ENCODE measurements at regions of chr6 and their contacts with region 1.

Region 1: DNA sequence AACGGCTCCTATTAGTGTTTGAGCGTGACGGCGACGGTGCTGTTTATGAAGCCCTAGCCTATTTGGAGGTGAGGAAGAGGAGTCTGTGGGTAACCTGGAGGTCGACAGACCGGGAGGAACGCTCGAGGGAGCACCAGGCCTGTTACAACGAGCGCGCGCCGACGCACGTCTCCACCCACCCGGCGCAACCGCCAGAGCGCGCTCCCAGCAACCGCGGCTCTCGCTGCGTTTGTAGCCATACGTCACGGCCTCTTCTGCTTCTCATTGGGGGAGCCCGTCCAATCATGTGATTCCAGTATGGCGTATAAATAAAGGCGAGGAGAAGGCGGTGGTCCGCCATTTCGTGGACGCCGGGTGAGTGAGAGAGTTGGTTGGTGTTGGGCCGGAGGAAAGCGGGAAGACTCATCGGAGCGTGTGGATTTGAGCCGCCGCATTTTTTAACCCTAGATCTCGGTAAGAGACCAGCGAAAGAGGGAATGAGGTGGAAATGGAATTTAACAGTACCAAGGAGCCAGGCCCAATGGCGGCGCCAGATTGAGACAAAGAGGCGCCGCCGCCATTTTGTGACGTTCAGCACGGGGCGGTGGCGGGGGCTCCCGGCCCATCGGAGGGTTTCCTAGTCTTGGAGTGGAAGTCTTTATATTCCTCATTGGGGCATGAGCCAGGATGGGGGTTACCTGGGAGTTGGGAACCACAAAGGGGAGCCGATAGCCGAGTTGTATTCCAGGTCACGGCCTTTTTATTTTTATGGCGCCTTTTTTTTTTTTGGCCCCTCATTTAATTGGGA is at the start of gene SRSF3:
- DNase-seq: peak; percentile 87 to 99 (median 97)
- ATAC-seq: peak; percentile 95
- H3K4me3 ChIP-seq: peak within 1 kb of the TSS; percentile 85
- H3K4me3 Mint-ChIP-seq: peak within 1 kb of the TSS; percentile 90 to 99 (median 97)
- H3K27ac ChIP-seq: peak within 1 kb of the TSS; percentile 98
- H3K27ac Mint-ChIP-seq: peak within 1 kb of the TSS; percentile 97 to 100 (median 99)
- H3K4me1 ChIP-seq: peaks cover 23 to 34% of the 10 kb centered on the region in 2 donors
- H3K4me1 Mint-ChIP-seq: peaks cover 23 to 50% (median 39%) of the 10 kb centered on the region in 7 donors
- H3K27me3 ChIP-seq: no peaks in the 10 kb centered on the region
- H3K27me3 Mint-ChIP-seq: peaks cover 0 to 3% (median 0%) of the 10 kb centered on the region in 5 donors
- total RNA-seq, gene SRSF3: 317 to 510 (median 426) TPM

Region 2: DNA sequence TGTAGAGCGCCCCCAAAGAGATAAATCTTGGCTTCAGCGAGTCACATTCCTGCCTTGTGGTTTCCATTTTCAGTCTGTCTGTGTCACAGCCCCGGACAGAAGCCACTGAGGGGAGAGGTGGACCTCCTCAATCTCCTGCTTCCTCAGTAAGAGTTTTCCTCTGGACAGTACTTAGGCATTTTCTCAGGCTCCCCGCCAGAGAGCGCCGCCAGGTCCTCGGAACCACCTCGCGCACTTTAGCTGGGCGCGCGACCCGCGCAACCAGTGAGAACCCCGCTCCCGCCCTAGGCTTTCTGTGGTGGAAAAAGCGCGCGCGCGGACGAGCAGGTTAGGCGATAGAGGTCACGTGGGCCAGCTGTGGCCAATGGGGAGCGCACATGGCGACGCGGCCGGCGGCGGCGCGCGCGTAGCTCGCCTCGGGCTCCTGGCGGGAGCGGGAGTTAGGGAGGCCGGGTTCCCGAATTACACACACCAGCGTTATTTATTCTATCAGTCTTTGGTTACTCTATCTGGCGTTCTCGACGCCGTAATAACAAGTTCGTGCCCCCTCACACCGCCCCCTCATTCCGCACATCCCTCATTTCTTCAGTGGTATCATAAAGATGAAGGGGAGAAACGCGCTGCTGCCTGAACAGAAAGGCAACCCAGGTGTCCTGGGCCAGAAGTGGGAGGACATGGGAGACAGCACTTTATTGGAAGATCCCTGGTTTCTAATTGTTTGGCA is 171.0 kb before region 1 on chr6:
- CTCF ChIA-PET with region 1: interaction called, 3 read pairs
- POLR2A ChIA-PET with region 1: interaction called, 9 read pairs
- intact Hi-C with region 1: loop called (anchors 1 kb)
- DNase-seq: peak; percentile 94 to 98 (median 97)
- ATAC-seq: peak; percentile 99
- H3K4me3 ChIP-seq: peak overlapping the region; percentile 70
- H3K4me3 Mint-ChIP-seq: peak overlapping the region; percentile 85 to 96 (median 94)
- H3K27ac ChIP-seq: peak overlapping the region; percentile 75
- H3K27ac Mint-ChIP-seq: peak overlapping the region; percentile 84 to 97 (median 93)
- H3K4me1 ChIP-seq: peaks cover 0 to 10% of the 10 kb centered on the region in 2 donors
- H3K4me1 Mint-ChIP-seq: peaks cover 10 to 21% (median 18%) of the 10 kb centered on the region in 7 donors
- H3K27me3 ChIP-seq: no peaks in the 10 kb centered on the region
- H3K27me3 Mint-ChIP-seq: no peaks in the 10 kb centered on the region

Region 3: DNA sequence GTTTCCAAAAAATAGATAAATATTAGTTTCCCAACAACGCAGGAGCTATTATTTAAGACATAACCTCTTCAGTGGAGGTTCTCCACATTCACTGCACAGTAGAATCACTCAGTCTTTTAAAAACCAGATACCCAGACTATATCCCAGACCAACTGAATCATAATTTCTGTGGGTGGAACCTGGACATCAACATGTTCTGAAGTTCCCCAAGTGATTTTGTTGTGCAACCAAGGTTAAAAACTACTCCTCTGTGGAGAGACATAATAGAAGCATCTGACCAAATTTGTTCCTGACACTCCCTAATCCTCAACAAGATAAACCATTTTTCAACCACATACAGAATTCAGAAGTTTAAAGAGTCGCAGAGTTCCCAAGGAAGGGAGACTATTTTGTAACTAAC is 89.2 kb before region 1 on chr6:
- CTCF ChIA-PET with region 1: no interaction called
- POLR2A ChIA-PET with region 1: interaction called, 19 read pairs
- intact Hi-C with region 1: no loop called
- DNase-seq: no peak
- ATAC-seq: no peak
- H3K4me3 ChIP-seq: no peak overlapping the region
- H3K4me3 Mint-ChIP-seq: peak overlapping the region in 2 of 10 donors; percentile 45 to 66
- H3K27ac ChIP-seq: no peak overlapping the region
- H3K27ac Mint-ChIP-seq: peak overlapping the region in 7 of 9 donors; percentile 59 to 95 (median 84)
- H3K4me1 ChIP-seq: peaks cover 13 to 38% of the 10 kb centered on the region in 2 donors
- H3K4me1 Mint-ChIP-seq: peaks cover 20 to 56% (median 48%) of the 10 kb centered on the region in 7 donors
- H3K27me3 ChIP-seq: no peaks in the 10 kb centered on the region
- H3K27me3 Mint-ChIP-seq: no peaks in the 10 kb centered on the region

Region 4: DNA sequence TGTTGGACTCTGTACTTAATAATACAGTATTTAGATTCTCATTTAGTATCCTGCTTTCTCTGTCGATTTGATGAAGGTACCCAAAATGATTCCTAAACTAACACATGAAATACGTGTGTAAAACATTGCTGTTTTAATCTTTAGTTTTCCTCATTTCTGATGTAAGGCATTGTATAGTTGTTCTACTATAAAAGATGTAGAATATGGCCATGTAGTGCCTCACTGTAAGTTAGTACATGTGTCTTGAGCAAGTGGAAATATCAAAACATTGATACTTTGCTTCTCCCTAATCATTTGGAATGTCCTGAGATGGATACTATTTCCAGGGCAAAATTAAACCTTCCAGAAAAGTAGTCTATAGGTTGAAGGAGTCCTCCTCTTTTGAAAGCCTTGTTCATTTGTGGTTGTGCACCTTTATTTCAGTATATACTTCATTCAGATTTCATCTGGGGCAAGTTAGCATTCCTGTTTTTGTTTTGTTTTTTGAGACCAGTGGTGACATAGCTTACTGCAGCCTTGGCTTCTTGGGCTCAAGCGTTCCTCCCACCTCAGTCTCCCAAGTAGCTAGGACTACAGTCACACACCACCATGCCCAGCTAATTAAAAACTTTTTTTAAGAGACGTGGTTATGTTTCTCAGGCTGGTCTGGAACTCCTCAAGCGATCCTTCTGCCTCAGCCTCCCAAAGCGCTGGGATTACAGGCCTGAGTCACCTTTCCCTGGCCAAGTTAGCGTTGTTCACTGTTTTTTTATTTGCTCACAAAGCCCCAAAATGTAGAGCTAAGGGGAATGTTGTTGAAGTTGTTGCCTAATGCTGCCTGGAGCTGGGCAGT is 11.6 kb after region 1 on chr6:
- CTCF ChIA-PET with region 1: no interaction called
- POLR2A ChIA-PET with region 1: interaction called, 53 read pairs
- intact Hi-C with region 1: loop called (anchors 1 kb)
- DNase-seq: no peak
- ATAC-seq: no peak
- H3K4me3 ChIP-seq: no peak overlapping the region
- H3K4me3 Mint-ChIP-seq: peak overlapping the region in 6 of 10 donors; percentile 0 to 90 (median 48)
- H3K27ac ChIP-seq: peak overlapping the region; percentile 21
- H3K27ac Mint-ChIP-seq: peak overlapping the region; percentile 0 to 97 (median 66)
- H3K4me1 ChIP-seq: peaks cover 52 to 55% of the 10 kb centered on the region in 2 donors
- H3K4me1 Mint-ChIP-seq: peaks cover 42 to 94% (median 78%) of the 10 kb centered on the region in 7 donors
- H3K27me3 ChIP-seq: no peaks in the 10 kb centered on the region
- H3K27me3 Mint-ChIP-seq: no peaks in the 10 kb centered on the region

Region 5: DNA sequence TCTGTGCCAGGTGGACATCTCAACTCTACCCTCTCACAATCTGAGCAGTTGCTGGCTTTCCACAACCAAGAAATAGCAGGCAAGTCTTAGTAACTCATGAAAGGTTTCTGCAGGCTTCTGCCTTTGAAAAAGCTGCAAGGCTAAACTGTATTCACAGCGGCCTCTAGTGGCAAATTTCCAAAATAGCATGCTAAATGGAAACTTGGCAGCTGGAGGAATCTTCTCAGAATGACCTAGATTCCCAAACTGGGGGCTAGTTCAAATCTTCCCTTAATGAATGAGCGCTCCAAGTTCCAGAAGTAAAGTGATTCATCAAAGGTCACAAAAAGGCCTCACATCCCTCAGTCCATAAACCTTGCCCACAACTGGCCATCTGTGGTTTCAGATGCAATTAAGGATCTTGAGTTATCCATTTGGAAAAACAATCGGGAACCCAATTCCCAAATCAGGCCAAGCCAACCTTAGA is 257.0 kb after region 1 on chr6:
- CTCF ChIA-PET with region 1: no interaction called
- POLR2A ChIA-PET with region 1: no interaction called
- intact Hi-C with region 1: no loop called
- DNase-seq: peak in 5 of 9 donors; percentile 38 to 54 (median 44)
- ATAC-seq: no peak
- H3K4me3 ChIP-seq: no peak overlapping the region
- H3K4me3 Mint-ChIP-seq: no peak overlapping the region
- H3K27ac ChIP-seq: no peak overlapping the region
- H3K27ac Mint-ChIP-seq: no peak overlapping the region
- H3K4me1 ChIP-seq: no peaks in the 10 kb centered on the region
- H3K4me1 Mint-ChIP-seq: peaks cover 0 to 13% (median 7%) of the 10 kb centered on the region in 7 donors
- H3K27me3 ChIP-seq: no peaks in the 10 kb centered on the region
- H3K27me3 Mint-ChIP-seq: peaks cover 0 to 5% (median 5%) of the 10 kb centered on the region in 5 donors

Region 6: GRCh38 chr6:36874443-36875249 is 280.4 kb after region 1 on chr6 and contains the start of gene PPIL1:
- CTCF ChIA-PET with region 1: no interaction called
- POLR2A ChIA-PET with region 1: interaction called, 6 read pairs
- intact Hi-C with region 1: loop called in 1 of 2 experiments (anchors 1 kb)
- DNase-seq: peak; percentile 75 to 92 (median 90)
- ATAC-seq: peak; percentile 92
- H3K4me3 ChIP-seq: peak within 1 kb of the TSS; percentile 92
- H3K4me3 Mint-ChIP-seq: peak within 1 kb of the TSS; percentile 85 to 100 (median 98)
- H3K27ac ChIP-seq: peak within 1 kb of the TSS; percentile 87
- H3K27ac Mint-ChIP-seq: peak within 1 kb of the TSS; percentile 97 to 100 (median 98)
- H3K4me1 ChIP-seq: peaks cover 8 to 21% of the 10 kb centered on the region in 2 donors
- H3K4me1 Mint-ChIP-seq: peaks cover 13 to 54% (median 47%) of the 10 kb centered on the region in 7 donors
- H3K27me3 ChIP-seq: no peaks in the 10 kb centered on the region
- H3K27me3 Mint-ChIP-seq: peaks cover 0 to 7% (median 5%) of the 10 kb centered on the region in 5 donors
- total RNA-seq, gene PPIL1: 3.5 to 34.7 (median 10.3) TPM

Region 7: GRCh38 chr6:37074053-37074827 is 480.0 kb after region 1 on chr6:
- CTCF ChIA-PET with region 1: no interaction called
- POLR2A ChIA-PET with region 1: no interaction called
- intact Hi-C with region 1: no loop called
- DNase-seq: no peak
- ATAC-seq: no peak
- H3K4me3 ChIP-seq: no peak overlapping the region
- H3K4me3 Mint-ChIP-seq: no peak overlapping the region
- H3K27ac ChIP-seq: no peak overlapping the region
- H3K27ac Mint-ChIP-seq: peak overlapping the region in 2 of 9 donors; percentile 4 to 23
- H3K4me1 ChIP-seq: peaks cover 0 to 11% of the 10 kb centered on the region in 2 donors
- H3K4me1 Mint-ChIP-seq: peaks cover 14 to 21% (median 15%) of the 10 kb centered on the region in 7 donors
- H3K27me3 ChIP-seq: no peaks in the 10 kb centered on the region
- H3K27me3 Mint-ChIP-seq: no peaks in the 10 kb centered on the region